ENCODE measurements at regions of chr19 and their contacts with region 1.

Region 1: DNA sequence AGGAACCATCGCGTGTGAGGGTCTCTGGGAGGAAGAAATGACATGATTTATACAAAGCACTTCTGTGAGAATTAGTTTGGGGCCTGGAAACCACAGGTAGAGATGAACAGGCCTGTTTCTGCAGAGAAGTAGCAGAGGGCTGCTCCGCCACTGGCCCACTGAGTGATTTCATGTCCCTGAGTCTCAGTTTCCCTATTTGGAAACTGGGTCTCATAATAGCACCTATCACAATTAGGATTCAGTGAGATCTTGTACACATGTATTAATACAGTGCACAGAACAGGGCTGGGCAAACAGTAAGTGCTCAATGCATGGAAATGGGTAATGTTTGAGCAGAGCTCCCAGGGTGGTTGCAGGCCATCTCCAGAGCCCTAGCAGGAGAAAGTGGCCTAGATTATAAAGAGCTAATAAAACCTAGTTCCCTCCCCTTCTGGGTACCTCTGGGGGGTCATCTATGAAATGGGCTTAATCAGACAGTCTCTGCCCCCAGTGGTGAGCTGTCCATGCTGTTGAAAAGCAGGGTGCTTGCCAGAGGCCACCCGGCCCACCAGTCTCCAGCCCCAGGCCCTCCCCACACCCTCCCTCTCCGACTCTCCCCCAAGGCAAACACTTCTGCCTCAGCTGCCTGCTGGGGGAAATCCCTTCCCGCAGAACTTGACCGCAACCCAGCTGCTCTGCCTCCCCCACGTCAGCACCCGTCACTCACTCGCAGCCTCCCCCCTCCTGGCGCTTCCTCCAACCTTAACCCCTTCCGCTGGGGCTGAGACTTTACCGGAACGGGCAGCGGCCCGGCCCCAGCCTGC is 4.5 kb downstream of the BCL3 start:
- DNase-seq: peak; percentile 93 to 97
- ATAC-seq: peak; percentile 52 to 61
- H3K4me3 ChIP-seq: peak overlapping the region; percentile 95
- H3K27ac ChIP-seq: peak overlapping the region; percentile 92 to 99
- H3K4me1 ChIP-seq: peaks cover 83% of the 10 kb centered on the region
- CTCF ChIP-seq: no peak
- EP300 ChIP-seq: peak; percentile 78 to 92; a peak in 4 of 5 replicates
- POLR2A ChIP-seq: no peak
- RAD21 ChIP-seq: no peak; a peak in 2 of 5 replicates

Region 2: DNA sequence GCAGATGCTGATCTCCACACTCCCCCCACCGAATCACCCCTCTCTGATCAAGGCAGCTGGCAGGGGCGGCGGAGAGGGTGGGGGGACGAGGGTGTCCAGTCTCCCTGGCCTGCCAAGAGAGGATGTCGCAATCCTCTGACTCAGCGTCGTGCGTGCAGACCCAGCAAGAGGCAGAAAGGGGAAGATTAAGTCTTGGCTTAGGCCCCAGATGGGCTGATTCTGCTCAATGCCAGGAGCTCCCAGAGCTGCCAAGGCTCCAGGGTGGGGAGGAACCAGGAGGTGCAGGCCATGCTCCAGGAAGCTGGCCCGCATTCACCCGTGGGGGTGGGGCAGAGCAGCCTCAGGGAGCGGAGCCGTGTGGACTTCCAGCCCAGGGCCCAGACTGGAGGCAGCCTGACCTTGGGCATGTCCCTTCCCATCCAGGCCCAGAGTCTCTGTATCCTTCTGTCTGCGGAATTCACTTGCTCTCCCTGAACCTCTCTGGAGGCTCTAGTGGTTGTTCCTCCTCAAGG is 11.1 kb before region 1 on chr19:
- CTCF ChIA-PET with region 1: interaction called, 1,899 read pairs
- POLR2A ChIA-PET with region 1: interaction called, 11 read pairs
- DNase-seq: peak; percentile 97 to 100
- ATAC-seq: peak; percentile 62 to 73
- H3K4me3 ChIP-seq: 0 out of 3 replicates have a peak overlapping the region, but pooled peaks have one; percentile 2
- H3K27ac ChIP-seq: peak overlapping the region; percentile 92 to 99
- H3K4me1 ChIP-seq: peaks cover 93% of the 10 kb centered on the region
- CTCF ChIP-seq: no peak
- EP300 ChIP-seq: peak; percentile 97 to 99
- POLR2A ChIP-seq: peak; percentile 39; the same call in 1 of the 2 replicates
- RAD21 ChIP-seq: peak; percentile 37 to 67

Measured in A549 (cell line).